CD8-positive, alpha-beta T cell (primary cell): ENCODE measurements at regions of chr1 and their contacts with region 1.

Region 1: GRCh38 chr1:207499573-207499972 is 3.6 kb downstream of the CR1 start:
- DNase-seq: peak; percentile 36 to 84 (median 71)
- ATAC-seq: peak; percentile 77
- H3K4me3 ChIP-seq: no peak overlapping the region
- H3K4me3 Mint-ChIP-seq: no peak overlapping the region
- H3K27ac ChIP-seq: no peak overlapping the region
- H3K27ac Mint-ChIP-seq: no peak overlapping the region
- H3K4me1 ChIP-seq: peaks cover 3% of the 10 kb centered on the region
- H3K4me1 Mint-ChIP-seq: peaks cover 23% of the 10 kb centered on the region
- H3K27me3 ChIP-seq: no peaks in the 10 kb centered on the region
- H3K27me3 Mint-ChIP-seq: peaks cover 16% of the 10 kb centered on the region
- CTCF ChIP-seq: peak; percentile 86

Region 2: GRCh38 chr1:207077470-207078377 is 421.8 kb before region 1 on chr1:
- CTCF ChIA-PET with region 1: interaction called, 41 read pairs
- POLR2A ChIA-PET with region 1: no interaction called
- intact Hi-C with region 1: no loop called
- DNase-seq: peak; percentile 34 to 84 (median 59)
- ATAC-seq: peak; percentile 99
- H3K4me3 ChIP-seq: no peak overlapping the region
- H3K4me3 Mint-ChIP-seq: no peak overlapping the region
- H3K27ac ChIP-seq: no peak overlapping the region
- H3K27ac Mint-ChIP-seq: no peak overlapping the region
- H3K4me1 ChIP-seq: no peaks in the 10 kb centered on the region
- H3K4me1 Mint-ChIP-seq: peaks cover 4% of the 10 kb centered on the region
- H3K27me3 ChIP-seq: no peaks in the 10 kb centered on the region
- H3K27me3 Mint-ChIP-seq: peaks cover 6% of the 10 kb centered on the region
- CTCF ChIP-seq: peak; percentile 94

Region 3: GRCh38 chr1:207181838-207182237 is 317.7 kb before region 1 on chr1:
- CTCF ChIA-PET with region 1: interaction called, 12 read pairs
- POLR2A ChIA-PET with region 1: no interaction called
- intact Hi-C with region 1: loop called (anchors 1 kb)
- DNase-seq: peak in 2 of 9 experiments; percentile 24 to 46
- ATAC-seq: no peak
- H3K4me3 ChIP-seq: no peak overlapping the region
- H3K4me3 Mint-ChIP-seq: no peak overlapping the region
- H3K27ac ChIP-seq: no peak overlapping the region
- H3K27ac Mint-ChIP-seq: no peak overlapping the region
- H3K4me1 ChIP-seq: no peaks in the 10 kb centered on the region
- H3K4me1 Mint-ChIP-seq: no peaks in the 10 kb centered on the region
- H3K27me3 ChIP-seq: no peaks in the 10 kb centered on the region
- H3K27me3 Mint-ChIP-seq: peaks cover 4% of the 10 kb centered on the region
- CTCF ChIP-seq: no peak

Region 4: GRCh38 chr1:207404849-207405525 is 94.6 kb before region 1 on chr1:
- CTCF ChIA-PET with region 1: interaction called, 36 read pairs
- POLR2A ChIA-PET with region 1: interaction called, 4 read pairs
- intact Hi-C with region 1: loop called (anchors 1 kb)
- DNase-seq: peak in 2 of 9 experiments; percentile 68 to 79
- ATAC-seq: peak; percentile 71
- H3K4me3 ChIP-seq: no peak overlapping the region
- H3K4me3 Mint-ChIP-seq: no peak overlapping the region
- H3K27ac ChIP-seq: no peak overlapping the region
- H3K27ac Mint-ChIP-seq: no peak overlapping the region
- H3K4me1 ChIP-seq: no peaks in the 10 kb centered on the region
- H3K4me1 Mint-ChIP-seq: peaks cover 3% of the 10 kb centered on the region
- H3K27me3 ChIP-seq: no peaks in the 10 kb centered on the region
- H3K27me3 Mint-ChIP-seq: peaks cover 5% of the 10 kb centered on the region
- CTCF ChIP-seq: peak; percentile 91

Region 5: GRCh38 chr1:207463021-207463420 is 36.6 kb before region 1 on chr1:
- CTCF ChIA-PET with region 1: interaction called, 8 read pairs
- POLR2A ChIA-PET with region 1: interaction called, 5 read pairs
- intact Hi-C with region 1: loop called in 1 of 2 experiments (anchors 1 kb)
- DNase-seq: peak in 1 of 9 experiments; percentile 9
- ATAC-seq: no peak
- H3K4me3 ChIP-seq: no peak overlapping the region
- H3K4me3 Mint-ChIP-seq: no peak overlapping the region
- H3K27ac ChIP-seq: no peak overlapping the region
- H3K27ac Mint-ChIP-seq: peak overlapping the region; percentile 28
- H3K4me1 ChIP-seq: peaks cover 65% of the 10 kb centered on the region
- H3K4me1 Mint-ChIP-seq: peaks cover 69% of the 10 kb centered on the region
- H3K27me3 ChIP-seq: no peaks in the 10 kb centered on the region
- H3K27me3 Mint-ChIP-seq: no peaks in the 10 kb centered on the region
- CTCF ChIP-seq: no peak

Region 6: GRCh38 chr1:207487636-207488035 is 11.9 kb before region 1 on chr1:
- CTCF ChIA-PET with region 1: interaction called, 11 read pairs
- POLR2A ChIA-PET with region 1: no interaction called
- intact Hi-C with region 1: no loop called
- DNase-seq: no peak
- ATAC-seq: no peak
- H3K4me3 ChIP-seq: no peak overlapping the region
- H3K4me3 Mint-ChIP-seq: no peak overlapping the region
- H3K27ac ChIP-seq: no peak overlapping the region
- H3K27ac Mint-ChIP-seq: no peak overlapping the region
- H3K4me1 ChIP-seq: no peaks in the 10 kb centered on the region
- H3K4me1 Mint-ChIP-seq: no peaks in the 10 kb centered on the region
- H3K27me3 ChIP-seq: no peaks in the 10 kb centered on the region
- H3K27me3 Mint-ChIP-seq: no peaks in the 10 kb centered on the region
- CTCF ChIP-seq: no peak

Region 7: GRCh38 chr1:208731981-208732821 is 1232.6 kb after region 1 on chr1:
- CTCF ChIA-PET with region 1: no interaction called
- POLR2A ChIA-PET with region 1: no interaction called
- intact Hi-C with region 1: no loop called
- DNase-seq: peak in 1 of 9 experiments; percentile 3
- ATAC-seq: no peak
- H3K4me3 ChIP-seq: no peak overlapping the region
- H3K4me3 Mint-ChIP-seq: no peak overlapping the region
- H3K27ac ChIP-seq: no peak overlapping the region
- H3K27ac Mint-ChIP-seq: no peak overlapping the region
- H3K4me1 ChIP-seq: no peaks in the 10 kb centered on the region
- H3K4me1 Mint-ChIP-seq: peaks cover 6% of the 10 kb centered on the region
- H3K27me3 ChIP-seq: no peaks in the 10 kb centered on the region
- H3K27me3 Mint-ChIP-seq: peaks cover 3% of the 10 kb centered on the region
- CTCF ChIP-seq: no peak